ENCODE measurements at regions of chr6 and their contacts with region 1.

Region 1: GRCh38 chr6:13908955-13909381 is 15.8 kb upstream of the RNF182 start:
- DNase-seq: peak; percentile 80
- ATAC-seq: peak; percentile 85
- H3K4me3 ChIP-seq: no peak overlapping the region
- H3K4me3 Mint-ChIP-seq: no peak overlapping the region
- H3K27ac ChIP-seq: no peak overlapping the region
- H3K27ac Mint-ChIP-seq: no peak overlapping the region
- H3K4me1 ChIP-seq: no peaks in the 10 kb centered on the region
- H3K4me1 Mint-ChIP-seq: peaks cover 1% of the 10 kb centered on the region
- H3K27me3 ChIP-seq: peaks cover 0 to 7% (median 3%) of the 10 kb centered on the region in 4 experiments
- H3K27me3 Mint-ChIP-seq: peaks cover 26% of the 10 kb centered on the region
- CTCF ChIP-seq: peak; percentile 98

Region 2: GRCh38 chr6:13814176-13814937 is 94.6 kb before region 1 on chr6 and contains the start of gene MCUR1:
- CTCF ChIA-PET with region 1: no interaction called
- POLR2A ChIA-PET with region 1: no interaction called
- intact Hi-C with region 1: no loop called
- DNase-seq: peak; percentile 94
- ATAC-seq: peak; percentile 82
- H3K4me3 ChIP-seq: peak within 1 kb of the TSS; percentile 63 to 88 (median 77)
- H3K4me3 Mint-ChIP-seq: peak within 1 kb of the TSS; percentile 94
- H3K27ac ChIP-seq: peak within 1 kb of the TSS; percentile 68 to 89
- H3K27ac Mint-ChIP-seq: peak within 1 kb of the TSS; percentile 89
- H3K4me1 ChIP-seq: peaks cover 17 to 20% of the 10 kb centered on the region in 2 donors
- H3K4me1 Mint-ChIP-seq: peaks cover 31% of the 10 kb centered on the region
- H3K27me3 ChIP-seq: no peaks in the 10 kb centered on the region
- H3K27me3 Mint-ChIP-seq: no peaks in the 10 kb centered on the region
- CTCF ChIP-seq: peak; percentile 14
- total RNA-seq, gene MCUR1: 10.6 and 11.2 TPM in 2 replicates

Region 3: DNA sequence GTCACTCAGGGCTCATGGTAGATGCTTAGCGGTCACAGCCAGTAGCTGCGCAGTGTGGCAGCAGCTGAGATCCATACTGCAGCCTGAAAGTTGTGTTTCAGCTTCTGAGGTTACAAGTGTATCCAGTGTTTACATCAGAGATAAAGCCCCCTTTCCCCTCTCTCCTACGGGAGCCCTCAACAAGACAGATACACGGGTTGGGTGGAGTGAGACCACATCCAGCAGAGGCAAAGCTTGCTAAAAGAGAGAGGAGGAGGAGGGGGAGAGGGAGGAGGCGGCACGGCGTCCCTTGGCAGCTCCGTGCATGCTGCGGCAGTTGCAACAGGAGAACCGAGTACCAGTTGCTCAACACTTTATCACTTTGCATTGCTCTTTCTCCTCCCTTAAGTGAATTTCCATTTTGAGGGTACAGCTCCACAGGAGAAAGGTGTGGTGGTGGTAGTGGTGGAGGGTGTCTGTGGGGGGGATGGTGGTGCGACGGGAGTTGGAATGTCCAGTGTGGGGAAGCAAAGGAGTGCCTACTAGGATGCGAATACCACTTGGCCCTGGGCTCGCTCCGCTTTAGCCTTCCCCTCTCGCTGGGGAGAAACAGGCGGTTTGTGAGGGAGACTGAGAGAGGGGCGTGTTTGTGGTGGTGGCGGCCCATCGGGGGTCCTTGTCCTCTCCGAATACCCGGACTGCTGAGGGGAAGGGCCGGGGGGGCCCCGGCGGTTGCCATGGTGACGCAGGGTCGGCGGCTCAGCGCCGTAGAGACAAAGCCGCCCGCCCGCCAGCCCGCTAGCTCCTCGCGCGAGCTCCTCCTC is 15.4 kb after region 1 on chr6:
- CTCF ChIA-PET with region 1: interaction called, 33 read pairs
- POLR2A ChIA-PET with region 1: no interaction called
- intact Hi-C with region 1: no loop called
- DNase-seq: peak; percentile 65
- ATAC-seq: peak; percentile 46
- H3K4me3 ChIP-seq: peak overlapping the region; percentile 11 to 65 (median 46)
- H3K4me3 Mint-ChIP-seq: peak overlapping the region; percentile 90
- H3K27ac ChIP-seq: no peak overlapping the region
- H3K27ac Mint-ChIP-seq: peak overlapping the region; percentile 46
- H3K4me1 ChIP-seq: peaks cover 15 to 22% of the 10 kb centered on the region in 2 donors
- H3K4me1 Mint-ChIP-seq: peaks cover 13% of the 10 kb centered on the region
- H3K27me3 ChIP-seq: peaks cover 0 to 52% (median 41%) of the 10 kb centered on the region in 4 experiments
- H3K27me3 Mint-ChIP-seq: peaks cover 59% of the 10 kb centered on the region
- CTCF ChIP-seq: no peak

Region 4: GRCh38 chr6:14129575-14129974 is 220.6 kb after region 1 on chr6:
- CTCF ChIA-PET with region 1: interaction called, 178 read pairs
- POLR2A ChIA-PET with region 1: no interaction called
- intact Hi-C with region 1: no loop called
- DNase-seq: peak; percentile 69
- ATAC-seq: no peak
- H3K4me3 ChIP-seq: peak overlapping the region in 1 of 5 experiments; percentile 15
- H3K4me3 Mint-ChIP-seq: peak overlapping the region; percentile 82
- H3K27ac ChIP-seq: peak overlapping the region in 1 of 2 donors; percentile 43
- H3K27ac Mint-ChIP-seq: peak overlapping the region; percentile 80
- H3K4me1 ChIP-seq: peaks cover 78 to 90% of the 10 kb centered on the region in 2 donors
- H3K4me1 Mint-ChIP-seq: peaks cover 93% of the 10 kb centered on the region
- H3K27me3 ChIP-seq: no peaks in the 10 kb centered on the region
- H3K27me3 Mint-ChIP-seq: no peaks in the 10 kb centered on the region
- CTCF ChIP-seq: no peak

Region 5: DNA sequence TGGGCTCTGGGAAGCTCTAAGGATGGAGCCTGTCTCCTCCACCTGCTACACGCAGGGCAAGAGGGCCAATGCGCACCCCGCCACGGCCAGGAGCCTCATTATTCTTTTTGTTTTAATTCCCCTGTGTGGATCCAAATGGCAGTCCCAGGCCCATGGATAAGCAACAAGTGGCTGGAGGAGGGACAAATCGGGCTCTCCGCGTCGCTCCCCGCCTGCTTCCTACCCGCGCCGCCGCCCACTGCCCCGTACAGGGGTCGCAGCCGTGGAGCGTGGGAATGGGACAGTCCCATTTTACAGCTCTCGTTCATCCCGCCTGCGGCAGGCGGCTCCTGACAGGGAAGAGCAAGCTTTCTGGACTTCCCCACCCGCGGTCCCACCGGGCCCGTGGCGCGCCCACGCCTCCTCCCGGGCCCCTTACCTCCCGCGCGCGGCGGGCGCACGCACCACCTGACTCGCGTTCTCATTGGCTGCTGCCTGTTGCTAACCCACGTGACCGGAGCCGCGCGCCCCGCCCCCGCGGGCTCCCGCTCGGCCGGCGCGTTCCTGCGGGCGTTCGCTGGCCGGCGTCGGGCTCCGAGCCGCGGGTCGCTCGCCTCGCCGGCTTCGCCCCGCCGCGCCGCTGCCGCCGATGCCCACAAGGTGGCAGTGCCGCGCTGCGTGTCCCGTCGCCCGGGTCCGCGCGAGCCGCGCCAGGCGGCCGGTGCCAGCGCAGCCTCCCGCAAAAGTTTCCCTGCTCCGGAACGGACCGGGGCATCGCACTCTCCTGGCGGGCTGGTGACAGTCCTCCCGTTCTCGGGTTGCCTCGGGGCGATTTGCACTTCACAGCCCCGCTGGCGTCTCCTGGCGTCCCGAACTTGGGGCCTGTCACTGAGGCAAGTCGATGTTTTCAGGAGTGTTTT is 301.9 kb after region 1 on chr6:
- CTCF ChIA-PET with region 1: interaction called, 15 read pairs
- POLR2A ChIA-PET with region 1: no interaction called
- intact Hi-C with region 1: loop called (anchors 1 kb)
- DNase-seq: peak; percentile 96
- ATAC-seq: peak; percentile 91
- H3K4me3 ChIP-seq: peak overlapping the region; percentile 3 to 92 (median 82)
- H3K4me3 Mint-ChIP-seq: peak overlapping the region; percentile 90
- H3K27ac ChIP-seq: peak overlapping the region; percentile 92 to 97
- H3K27ac Mint-ChIP-seq: peak overlapping the region; percentile 97
- H3K4me1 ChIP-seq: peaks cover 30 to 33% of the 10 kb centered on the region in 2 donors
- H3K4me1 Mint-ChIP-seq: peaks cover 44% of the 10 kb centered on the region
- H3K27me3 ChIP-seq: no peaks in the 10 kb centered on the region
- H3K27me3 Mint-ChIP-seq: no peaks in the 10 kb centered on the region
- CTCF ChIP-seq: peak; percentile 72

Region 6: DNA sequence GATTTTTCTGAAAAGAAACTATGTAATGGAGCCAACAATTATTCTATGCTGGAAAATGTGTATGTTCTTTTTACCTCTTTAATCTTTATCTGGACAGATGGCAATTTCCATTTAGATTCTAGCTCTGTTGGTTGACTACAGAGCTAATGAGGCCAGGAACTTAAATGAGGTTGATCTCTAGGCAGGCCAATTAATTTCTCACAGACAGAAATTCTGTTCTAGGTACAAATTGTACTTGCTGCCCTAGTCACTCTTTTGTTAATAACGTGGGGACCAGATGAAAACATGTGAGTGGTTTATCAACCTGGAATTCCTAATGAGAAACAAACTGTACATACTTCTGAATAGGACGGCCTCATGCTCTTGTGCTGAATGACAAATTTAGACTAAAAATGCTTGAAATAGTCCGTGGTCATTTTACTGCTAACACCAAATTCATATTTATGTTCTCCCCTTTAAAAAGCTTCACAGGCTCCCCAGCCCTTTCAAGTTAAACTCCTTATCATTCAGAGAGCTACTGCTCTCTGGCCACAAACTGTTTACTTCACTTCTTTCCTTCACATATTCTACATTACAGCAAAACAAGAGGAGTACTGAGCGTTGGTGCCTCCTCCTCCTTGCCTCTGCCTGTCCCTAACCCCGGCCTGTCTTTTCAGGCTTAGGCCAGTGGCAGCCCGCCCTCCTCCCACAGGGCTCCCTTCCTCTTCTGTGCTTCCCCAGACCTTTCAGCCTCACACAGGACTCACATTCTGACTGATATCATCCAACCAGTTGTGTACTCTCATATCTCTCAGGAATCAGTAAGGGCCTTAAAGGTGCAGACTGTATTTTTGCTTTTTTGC is 1712.5 kb after region 1 on chr6:
- CTCF ChIA-PET with region 1: interaction called, 16 read pairs
- POLR2A ChIA-PET with region 1: no interaction called
- intact Hi-C with region 1: loop called (anchors 2 kb)
- DNase-seq: peak; percentile 32
- ATAC-seq: peak; percentile 51
- H3K4me3 ChIP-seq: no peak overlapping the region
- H3K4me3 Mint-ChIP-seq: no peak overlapping the region
- H3K27ac ChIP-seq: peak overlapping the region in 1 of 2 donors; percentile 44
- H3K27ac Mint-ChIP-seq: peak overlapping the region; percentile 75
- H3K4me1 ChIP-seq: peaks cover 7 to 11% of the 10 kb centered on the region in 2 donors
- H3K4me1 Mint-ChIP-seq: peaks cover 36% of the 10 kb centered on the region
- H3K27me3 ChIP-seq: no peaks in the 10 kb centered on the region
- H3K27me3 Mint-ChIP-seq: no peaks in the 10 kb centered on the region
- CTCF ChIP-seq: no peak